ENCODE measurements at regions of chr4 and their contacts with region 1.

Region 1: DNA sequence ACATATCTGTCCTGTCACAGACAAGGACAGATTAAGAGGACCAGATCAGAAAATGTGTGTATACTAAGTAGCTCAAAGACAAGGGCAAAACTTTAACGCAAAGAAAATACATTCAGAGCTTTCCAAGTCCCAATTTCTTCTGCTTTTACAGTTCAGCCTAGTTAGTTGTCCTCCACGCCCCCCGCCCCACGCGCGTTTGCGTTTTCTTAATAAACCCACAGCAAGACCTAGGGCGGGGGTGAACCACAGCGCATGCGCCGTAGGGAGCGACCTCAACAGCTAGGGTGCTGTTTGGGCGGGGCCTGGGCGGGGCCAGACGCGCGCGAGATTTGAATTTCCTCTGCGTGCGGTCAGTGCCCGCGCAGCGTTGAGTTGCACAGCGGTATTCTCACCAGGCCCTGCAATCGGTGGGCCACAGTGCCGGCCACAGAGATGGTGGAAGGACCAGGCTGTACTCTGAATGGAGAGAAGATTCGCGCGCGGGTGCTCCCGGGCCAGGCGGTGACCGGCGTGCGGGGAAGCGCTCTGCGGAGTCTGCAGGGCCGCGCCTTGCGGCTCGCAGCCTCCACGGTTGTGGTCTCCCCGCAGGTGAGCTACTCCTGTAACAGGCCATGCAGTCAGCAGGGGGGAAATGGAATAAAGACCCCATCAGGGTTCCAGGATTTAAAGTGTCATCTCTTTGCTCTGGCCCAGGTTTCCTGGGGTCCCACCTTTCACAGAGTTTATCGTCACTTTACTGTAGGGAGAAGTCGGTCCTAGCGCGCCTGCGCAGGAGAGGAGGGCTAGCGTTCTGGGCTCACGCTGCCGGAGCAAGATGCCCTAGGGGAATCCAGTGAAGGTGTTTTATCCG is at the start of gene NEIL3:
- DNase-seq: peak; percentile 88
- H3K4me3 Mint-ChIP-seq: peak within 1 kb of the TSS; percentile 95
- H3K27ac Mint-ChIP-seq: peak within 1 kb of the TSS; percentile 91
- H3K4me1 Mint-ChIP-seq: peaks cover 51% of the 10 kb centered on the region
- H3K27me3 Mint-ChIP-seq: no peaks in the 10 kb centered on the region
- total RNA-seq, gene NEIL3: 18.2 and 18.5 TPM in 2 replicates

Region 2: GRCh38 chr4:176319704-176320339 is 989.9 kb before region 1 on chr4 and contains the start of gene SPCS3:
- intact Hi-C with region 1: loop called (anchors 10 kb)
- DNase-seq: peak; percentile 92
- H3K4me3 Mint-ChIP-seq: peak within 1 kb of the TSS; percentile 94
- H3K27ac Mint-ChIP-seq: peak within 1 kb of the TSS; percentile 93
- H3K4me1 Mint-ChIP-seq: peaks cover 30% of the 10 kb centered on the region
- H3K27me3 Mint-ChIP-seq: peaks cover 5% of the 10 kb centered on the region
- total RNA-seq, gene SPCS3: 197 and 208 TPM in 2 replicates

Region 3: DNA sequence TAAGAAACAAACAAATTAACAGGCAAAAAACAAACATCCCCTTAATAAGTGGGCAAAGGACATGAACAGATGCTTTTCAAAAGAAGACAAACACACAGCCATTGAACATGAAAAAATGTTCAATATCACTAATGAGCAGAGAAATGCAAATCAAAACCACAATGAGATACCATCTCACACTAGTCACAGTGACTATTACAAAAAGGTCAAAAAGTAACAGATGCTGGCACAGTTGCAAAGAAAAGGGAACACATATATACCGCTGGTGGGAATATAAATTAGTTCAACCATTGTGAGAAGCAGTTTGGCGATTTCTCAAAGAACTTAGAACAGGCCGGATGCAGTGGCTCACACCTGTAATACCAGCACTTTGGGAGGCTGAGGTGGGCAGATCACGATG is 146.2 kb before region 1 on chr4:
- intact Hi-C with region 1: no loop called
- DNase-seq: no peak
- H3K4me3 Mint-ChIP-seq: no peak overlapping the region
- H3K27ac Mint-ChIP-seq: no peak overlapping the region
- H3K4me1 Mint-ChIP-seq: peaks cover 14% of the 10 kb centered on the region
- H3K27me3 Mint-ChIP-seq: peaks cover 2% of the 10 kb centered on the region

Region 4: GRCh38 chr4:177229331-177229730 is 80.4 kb before region 1 on chr4:
- intact Hi-C with region 1: loop called (anchors 5 kb)
- DNase-seq: no peak
- H3K4me3 Mint-ChIP-seq: peak overlapping the region; percentile 60
- H3K27ac Mint-ChIP-seq: peak overlapping the region; percentile 73
- H3K4me1 Mint-ChIP-seq: peaks cover 38% of the 10 kb centered on the region
- H3K27me3 Mint-ChIP-seq: no peaks in the 10 kb centered on the region

Region 5: GRCh38 chr4:177322266-177322665 is 12.5 kb after region 1 on chr4:
- intact Hi-C with region 1: loop called (anchors 1 kb)
- DNase-seq: no peak
- H3K4me3 Mint-ChIP-seq: no peak overlapping the region
- H3K27ac Mint-ChIP-seq: peak overlapping the region; percentile 24
- H3K4me1 Mint-ChIP-seq: peaks cover 79% of the 10 kb centered on the region
- H3K27me3 Mint-ChIP-seq: no peaks in the 10 kb centered on the region

Region 6: GRCh38 chr4:177401658-177402273 is 92.0 kb after region 1 on chr4:
- intact Hi-C with region 1: loop called (anchors 5 kb)
- DNase-seq: no peak
- H3K4me3 Mint-ChIP-seq: peak overlapping the region; percentile 0
- H3K27ac Mint-ChIP-seq: no peak overlapping the region
- H3K4me1 Mint-ChIP-seq: peaks cover 30% of the 10 kb centered on the region
- H3K27me3 Mint-ChIP-seq: peaks cover 16% of the 10 kb centered on the region